MCF 10A (cell line): ENCODE measurements at regions of chr11 and their contacts with region 1.

Region 1: DNA sequence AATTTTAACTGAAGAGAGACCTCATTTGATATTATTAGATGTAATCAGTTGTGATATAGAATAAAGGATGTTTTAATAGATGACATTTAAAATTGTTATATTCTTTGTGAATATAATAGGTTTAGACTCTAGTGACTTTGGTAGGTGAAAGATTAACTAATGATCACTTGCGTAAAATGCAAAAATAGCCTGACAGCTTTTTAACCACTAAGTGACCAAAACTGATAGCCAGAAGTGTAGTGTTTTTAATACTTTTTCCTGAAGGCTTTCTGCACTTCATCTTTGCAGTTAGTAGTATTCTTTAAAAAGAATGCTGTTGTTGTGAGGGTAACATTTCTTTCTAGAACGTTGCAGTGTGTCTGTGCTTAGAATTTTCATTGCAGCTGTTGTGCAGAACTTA is 5.1 kb downstream of the CAPRIN1 start:
- DNase-seq: no peak
- H3K4me3 Mint-ChIP-seq: peak overlapping the region; percentile 8
- H3K27ac Mint-ChIP-seq: no peak overlapping the region
- H3K4me1 Mint-ChIP-seq: peaks cover 20% of the 10 kb centered on the region
- H3K27me3 Mint-ChIP-seq: no peaks in the 10 kb centered on the region
- CTCF ChIP-seq: no peak

Region 2: DNA sequence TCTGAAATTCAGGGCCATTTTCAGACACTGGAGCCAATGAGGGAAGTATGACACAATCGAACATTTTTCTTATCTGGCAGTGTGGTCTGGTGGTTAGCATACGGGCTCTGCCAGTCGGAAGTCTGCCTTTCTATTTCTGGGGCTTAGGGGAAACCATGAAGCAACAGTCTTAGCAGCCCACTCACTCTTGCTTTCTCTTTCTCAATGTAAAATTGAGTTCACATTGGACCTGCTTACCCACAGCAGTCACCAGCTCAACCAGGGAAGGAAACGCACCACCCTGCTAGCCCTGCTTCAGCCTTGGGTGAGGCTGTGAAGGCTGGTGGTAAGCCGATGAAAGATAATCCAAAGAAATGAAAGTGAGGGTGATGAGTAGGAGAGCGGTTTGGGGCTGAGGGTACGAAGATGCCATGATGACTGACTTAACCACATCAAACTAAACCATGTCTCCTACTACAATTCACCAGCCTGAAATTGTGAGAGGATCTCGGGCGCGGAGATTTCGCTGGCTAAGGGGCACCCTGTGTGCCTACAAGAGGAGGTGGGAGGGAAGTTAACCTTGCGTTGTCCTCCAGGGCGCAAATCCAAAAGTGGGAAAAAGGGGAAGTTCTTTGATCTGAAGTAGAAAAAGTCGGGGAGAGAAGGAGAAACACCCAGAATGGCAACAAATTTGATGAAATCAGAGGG is 162.8 kb before region 1 on chr11:
- CTCF ChIA-PET with region 1: no interaction called
- POLR2A ChIA-PET with region 1: no interaction called
- intact Hi-C with region 1: no loop called
- DNase-seq: no peak
- H3K4me3 Mint-ChIP-seq: no peak overlapping the region
- H3K27ac Mint-ChIP-seq: no peak overlapping the region
- H3K4me1 Mint-ChIP-seq: peaks cover 10% of the 10 kb centered on the region
- H3K27me3 Mint-ChIP-seq: no peaks in the 10 kb centered on the region
- CTCF ChIP-seq: no peak

Region 3: GRCh38 chr11:33936725-33937604 is 119.7 kb before region 1 on chr11:
- CTCF ChIA-PET with region 1: no interaction called
- POLR2A ChIA-PET with region 1: no interaction called
- intact Hi-C with region 1: no loop called
- DNase-seq: no peak
- H3K4me3 Mint-ChIP-seq: no peak overlapping the region
- H3K27ac Mint-ChIP-seq: no peak overlapping the region
- H3K4me1 Mint-ChIP-seq: peaks cover 5% of the 10 kb centered on the region
- H3K27me3 Mint-ChIP-seq: no peaks in the 10 kb centered on the region
- CTCF ChIP-seq: no peak

Region 4: DNA sequence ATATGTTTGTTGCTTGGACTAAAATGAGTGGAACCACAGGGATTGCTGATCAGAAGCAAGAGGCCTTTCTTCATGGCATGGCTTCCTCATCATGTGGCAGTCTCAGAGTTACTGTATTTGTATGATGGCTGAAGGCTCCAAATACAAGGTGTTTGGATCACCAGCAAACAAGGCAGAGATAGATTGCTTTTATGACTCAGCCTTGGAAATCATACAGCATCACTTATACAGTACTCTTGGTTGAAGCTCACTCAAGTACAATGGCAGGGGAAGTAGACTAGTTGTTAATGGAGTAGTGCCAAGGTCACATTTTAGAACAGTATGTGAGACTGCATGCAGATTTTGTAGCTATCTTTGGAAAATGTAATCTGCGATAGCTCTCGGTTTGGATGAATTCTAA is 11.4 kb after region 1 on chr11:
- CTCF ChIA-PET with region 1: interaction called, 3 read pairs
- POLR2A ChIA-PET with region 1: interaction called, 13 read pairs
- intact Hi-C with region 1: no loop called
- DNase-seq: peak; percentile 25
- H3K4me3 Mint-ChIP-seq: no peak overlapping the region
- H3K27ac Mint-ChIP-seq: peak overlapping the region; percentile 27
- H3K4me1 Mint-ChIP-seq: peaks cover 18% of the 10 kb centered on the region
- H3K27me3 Mint-ChIP-seq: no peaks in the 10 kb centered on the region
- CTCF ChIP-seq: no peak

Region 5: DNA sequence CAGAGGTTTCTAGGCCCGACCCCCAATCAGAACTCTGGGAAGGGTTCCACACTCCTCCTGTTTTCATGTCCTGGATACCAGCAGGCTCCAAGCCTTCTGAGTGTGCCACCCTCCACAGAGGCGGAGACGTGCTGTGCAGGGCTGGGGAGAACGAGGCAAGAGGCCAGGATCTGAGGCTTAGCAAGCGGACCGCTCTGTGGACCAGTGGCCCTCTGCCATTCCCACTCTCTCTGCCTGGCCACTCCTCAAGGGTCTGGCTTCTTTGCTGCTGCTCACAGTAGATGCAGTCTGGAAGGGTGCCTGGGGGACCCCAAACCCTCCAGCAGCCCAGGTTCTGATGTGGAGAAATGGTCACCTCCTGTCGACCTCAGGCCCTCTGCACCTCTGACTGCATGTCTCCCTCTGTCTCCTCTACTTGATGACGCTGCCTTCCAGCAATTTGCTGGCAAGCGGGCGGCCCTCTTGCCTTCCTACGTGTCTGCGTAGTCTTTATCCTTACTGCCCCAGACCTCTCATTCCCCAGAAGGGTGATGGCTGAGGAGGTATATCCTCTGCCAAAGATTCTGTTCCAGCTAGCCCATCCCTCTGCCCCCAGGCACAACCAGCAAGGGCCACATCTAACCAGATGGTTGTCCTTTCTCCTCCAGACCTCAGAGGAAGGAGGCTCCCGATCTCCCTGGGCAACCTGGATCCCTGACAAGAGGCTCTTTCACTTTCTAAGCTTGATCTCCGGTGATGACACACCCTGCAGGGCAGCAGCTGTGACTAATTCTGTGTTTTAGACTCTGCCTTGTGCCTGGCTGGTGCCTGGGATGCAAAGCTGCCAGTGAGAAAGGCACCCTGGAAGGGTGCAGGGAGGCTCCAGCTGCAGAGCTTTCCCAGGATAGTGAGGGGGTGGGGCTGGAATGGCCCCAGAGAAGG is 136.1 kb after region 1 on chr11:
- CTCF ChIA-PET with region 1: no interaction called
- POLR2A ChIA-PET with region 1: no interaction called
- intact Hi-C with region 1: no loop called
- DNase-seq: peak; percentile 95
- H3K4me3 Mint-ChIP-seq: peak overlapping the region; percentile 64
- H3K27ac Mint-ChIP-seq: peak overlapping the region; percentile 74
- H3K4me1 Mint-ChIP-seq: peaks cover 11% of the 10 kb centered on the region
- H3K27me3 Mint-ChIP-seq: no peaks in the 10 kb centered on the region
- CTCF ChIP-seq: no peak